ENCODE measurements at regions of chr9 and their contacts with region 1.

Region 1: GRCh38 chr9:131678499-131679111 is 61.3 kb downstream of the RAPGEF1 start:
- DNase-seq: peak; percentile 96
- H3K4me3 Mint-ChIP-seq: peak overlapping the region; percentile 47
- H3K27ac Mint-ChIP-seq: peak overlapping the region; percentile 90
- H3K4me1 Mint-ChIP-seq: peaks cover 44% of the 10 kb centered on the region
- H3K27me3 Mint-ChIP-seq: no peaks in the 10 kb centered on the region
- CTCF ChIP-seq: no peak

Region 2: DNA sequence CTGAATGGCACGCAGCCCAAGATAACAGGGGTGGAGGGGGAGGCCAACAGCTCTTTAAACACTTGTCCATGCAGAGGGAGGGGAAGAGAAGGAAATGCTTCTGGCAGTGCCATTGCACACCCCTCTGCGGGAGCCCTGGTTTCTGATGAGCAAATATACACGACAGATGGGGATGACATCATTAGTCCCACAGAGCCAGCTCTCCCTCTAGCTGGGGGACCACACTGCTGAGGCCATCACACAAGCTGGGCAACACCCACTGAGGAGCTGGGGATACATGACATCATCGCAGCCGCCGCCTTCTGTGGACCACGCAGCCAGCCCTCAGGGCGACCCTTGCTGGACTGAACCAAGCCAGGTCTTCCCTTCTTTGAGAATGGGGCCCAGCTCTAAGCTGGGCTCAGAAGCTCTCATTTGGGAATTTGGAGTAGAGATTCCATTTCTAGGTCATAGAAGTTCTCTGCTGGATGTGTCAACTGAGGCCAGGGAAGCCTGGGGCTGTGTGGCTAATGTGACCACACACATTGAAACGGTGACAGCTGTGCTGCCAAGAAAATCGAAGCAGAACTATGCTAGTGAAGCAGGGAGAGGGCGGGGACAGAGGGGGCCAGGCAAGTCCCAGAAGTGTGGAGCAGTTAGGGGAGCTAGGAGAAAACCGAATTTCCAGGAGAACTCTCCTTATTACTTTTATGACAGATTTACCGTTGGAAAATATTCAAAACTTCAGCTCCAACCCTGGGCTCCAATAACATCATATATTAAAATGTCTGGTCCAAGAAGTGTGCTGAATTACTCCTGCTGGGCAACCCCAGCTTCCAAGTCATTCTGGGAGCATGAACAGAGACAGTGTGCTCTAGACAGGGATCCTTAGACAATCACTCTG is 53.7 kb before region 1 on chr9:
- CTCF ChIA-PET with region 1: no interaction called
- POLR2A ChIA-PET with region 1: no interaction called
- intact Hi-C with region 1: no loop called
- DNase-seq: no peak
- H3K4me3 Mint-ChIP-seq: no peak overlapping the region
- H3K27ac Mint-ChIP-seq: no peak overlapping the region
- H3K4me1 Mint-ChIP-seq: peaks cover 9% of the 10 kb centered on the region
- H3K27me3 Mint-ChIP-seq: no peaks in the 10 kb centered on the region
- CTCF ChIP-seq: no peak

Region 3: GRCh38 chr9:131635285-131635684 is 43.3 kb before region 1 on chr9:
- CTCF ChIA-PET with region 1: interaction called, 7 read pairs
- POLR2A ChIA-PET with region 1: interaction called, 25 read pairs
- intact Hi-C with region 1: no loop called
- DNase-seq: peak; percentile 97
- H3K4me3 Mint-ChIP-seq: no peak overlapping the region
- H3K27ac Mint-ChIP-seq: peak overlapping the region; percentile 77
- H3K4me1 Mint-ChIP-seq: peaks cover 30% of the 10 kb centered on the region
- H3K27me3 Mint-ChIP-seq: no peaks in the 10 kb centered on the region
- CTCF ChIP-seq: no peak

Region 4: GRCh38 chr9:131656356-131657036 is 22.1 kb before region 1 on chr9:
- CTCF ChIA-PET with region 1: interaction called, 7 read pairs
- POLR2A ChIA-PET with region 1: interaction called, 52 read pairs
- intact Hi-C with region 1: no loop called
- DNase-seq: no peak
- H3K4me3 Mint-ChIP-seq: no peak overlapping the region
- H3K27ac Mint-ChIP-seq: peak overlapping the region; percentile 7
- H3K4me1 Mint-ChIP-seq: peaks cover 36% of the 10 kb centered on the region
- H3K27me3 Mint-ChIP-seq: no peaks in the 10 kb centered on the region
- CTCF ChIP-seq: no peak

Region 5: DNA sequence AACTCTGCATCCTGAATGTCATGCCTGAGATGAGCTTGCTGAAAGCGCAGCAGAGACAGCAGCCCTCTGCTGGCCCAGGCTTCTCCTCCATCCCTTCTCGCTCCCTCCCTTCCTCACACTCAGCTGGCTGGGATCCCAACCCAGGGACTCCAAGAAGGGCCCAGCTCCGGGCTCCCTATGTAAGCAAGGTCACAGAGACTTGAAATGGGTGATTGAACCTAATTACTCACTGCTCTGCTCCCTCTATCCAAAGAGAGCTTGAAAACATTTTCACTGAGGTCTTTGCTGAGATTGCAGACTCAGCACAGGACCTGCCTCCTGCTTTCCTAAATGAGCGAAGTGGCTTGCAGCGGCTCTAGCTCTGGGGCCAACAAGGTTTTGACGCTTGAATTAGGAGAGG is 18.5 kb after region 1 on chr9:
- CTCF ChIA-PET with region 1: interaction called, 4 read pairs
- POLR2A ChIA-PET with region 1: interaction called, 72 read pairs
- intact Hi-C with region 1: no loop called
- DNase-seq: no peak
- H3K4me3 Mint-ChIP-seq: no peak overlapping the region
- H3K27ac Mint-ChIP-seq: no peak overlapping the region
- H3K4me1 Mint-ChIP-seq: peaks cover 24% of the 10 kb centered on the region
- H3K27me3 Mint-ChIP-seq: no peaks in the 10 kb centered on the region
- CTCF ChIP-seq: no peak

Region 6: DNA sequence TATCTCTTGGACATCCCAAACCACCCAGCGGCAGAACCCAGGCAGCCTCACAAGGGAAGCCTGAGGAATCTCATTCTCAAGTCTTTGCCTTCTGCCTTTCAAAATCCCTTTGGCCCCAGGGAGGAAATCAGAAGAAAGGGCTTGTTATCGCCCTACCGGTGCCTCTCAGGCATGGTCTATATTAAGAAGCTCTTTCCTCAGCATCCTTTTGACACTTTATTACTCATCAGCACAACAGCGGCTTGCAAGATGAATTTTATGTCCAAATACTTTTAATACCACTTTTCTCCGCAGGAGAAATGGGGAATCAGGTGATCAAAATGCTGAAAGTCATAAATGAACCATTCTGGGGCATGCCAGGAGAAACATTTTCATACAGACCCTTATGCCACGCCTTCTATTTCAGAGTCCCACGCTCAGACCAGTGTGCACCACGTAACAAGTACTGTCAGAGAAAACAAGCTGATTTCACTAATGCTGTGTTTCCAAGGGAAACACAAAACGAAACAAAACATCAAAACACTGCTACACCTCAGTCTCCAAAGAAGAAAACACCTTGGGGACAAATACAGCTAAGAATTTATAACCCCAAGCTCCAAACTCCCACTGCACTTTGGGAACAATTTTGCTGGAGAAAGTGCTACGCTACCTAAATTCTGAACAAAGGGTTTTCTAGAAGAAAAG is 31.3 kb after region 1 on chr9:
- CTCF ChIA-PET with region 1: interaction called, 10 read pairs
- POLR2A ChIA-PET with region 1: interaction called, 47 read pairs
- intact Hi-C with region 1: no loop called
- DNase-seq: peak; percentile 17
- H3K4me3 Mint-ChIP-seq: no peak overlapping the region
- H3K27ac Mint-ChIP-seq: peak overlapping the region; percentile 67
- H3K4me1 Mint-ChIP-seq: peaks cover 38% of the 10 kb centered on the region
- H3K27me3 Mint-ChIP-seq: no peaks in the 10 kb centered on the region
- CTCF ChIP-seq: no peak

Region 7: DNA sequence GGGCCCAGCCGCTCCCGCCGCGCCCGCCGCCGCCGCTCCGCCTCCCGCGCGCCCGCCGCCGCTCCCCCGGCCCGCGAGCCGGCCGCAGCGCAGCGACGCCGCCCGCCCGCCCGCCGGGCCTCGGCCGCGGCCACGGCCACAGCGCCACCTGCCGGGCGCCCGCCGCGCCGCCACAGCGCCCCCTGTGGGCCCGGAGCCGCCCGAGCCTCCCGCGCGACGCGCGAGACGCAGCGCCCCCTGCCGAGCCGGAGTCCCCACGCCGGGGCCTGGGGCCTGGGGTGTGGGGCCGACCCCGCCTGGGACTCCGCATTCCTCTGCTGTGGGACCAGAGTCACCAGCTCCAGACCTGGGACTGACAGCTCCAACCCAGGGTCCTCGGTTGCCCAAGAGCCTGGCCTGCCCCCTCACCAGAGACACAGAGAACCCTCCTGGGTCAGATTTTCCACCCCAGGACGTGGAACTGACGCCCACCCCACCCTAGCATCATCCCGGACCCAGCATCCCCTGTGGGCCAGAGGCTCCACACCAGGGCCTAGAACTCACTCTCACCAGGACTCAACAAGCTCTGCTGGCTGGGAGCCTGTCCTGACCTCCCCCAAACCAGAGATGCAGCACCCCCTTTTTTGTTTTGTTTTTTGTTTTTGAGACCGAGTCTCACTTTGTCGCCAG is 61.5 kb after region 1 on chr9 and contains the start of gene RAPGEF1:
- CTCF ChIA-PET with region 1: interaction called, 10 read pairs
- POLR2A ChIA-PET with region 1: interaction called, 19 read pairs
- intact Hi-C with region 1: no loop called
- DNase-seq: peak; percentile 42
- H3K4me3 Mint-ChIP-seq: peak within 1 kb of the TSS; percentile 85
- H3K27ac Mint-ChIP-seq: peak within 1 kb of the TSS; percentile 82
- H3K4me1 Mint-ChIP-seq: peaks cover 18% of the 10 kb centered on the region
- H3K27me3 Mint-ChIP-seq: no peaks in the 10 kb centered on the region
- CTCF ChIP-seq: peak; percentile 96
- total RNA-seq, gene RAPGEF1: 55.4 and 73.0 TPM in 2 replicates

Region 8: DNA sequence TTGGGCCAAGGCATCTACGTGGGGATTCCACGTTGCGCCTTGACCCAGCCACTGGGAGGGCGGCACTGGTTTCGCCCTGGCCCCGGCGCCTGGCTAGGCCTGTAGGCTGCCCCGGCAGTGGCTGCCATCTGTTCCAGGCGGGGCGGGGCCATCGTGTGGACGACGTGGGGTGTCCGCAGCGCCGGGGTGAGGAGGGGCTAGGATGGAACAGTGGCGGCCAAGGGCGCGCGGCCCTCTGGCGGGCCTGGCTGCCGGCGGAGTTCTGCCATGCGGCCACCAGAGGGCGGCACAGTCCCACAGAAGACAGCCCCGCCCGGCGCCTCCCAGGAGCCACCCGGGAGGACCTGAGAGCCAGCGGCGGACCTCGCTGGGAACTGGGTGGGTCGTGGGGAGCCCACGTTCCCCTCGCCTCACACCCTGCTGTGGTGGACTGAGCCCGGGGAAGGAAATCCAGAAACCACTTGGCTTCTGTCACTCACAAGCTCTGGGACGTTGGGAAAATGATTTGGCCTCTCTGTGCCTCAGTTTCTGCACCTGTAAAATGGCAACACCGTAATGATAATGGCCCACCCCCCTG is 83.8 kb after region 1 on chr9:
- CTCF ChIA-PET with region 1: no interaction called
- POLR2A ChIA-PET with region 1: no interaction called
- intact Hi-C with region 1: no loop called
- DNase-seq: peak; percentile 58
- H3K4me3 Mint-ChIP-seq: no peak overlapping the region
- H3K27ac Mint-ChIP-seq: no peak overlapping the region
- H3K4me1 Mint-ChIP-seq: no peaks in the 10 kb centered on the region
- H3K27me3 Mint-ChIP-seq: peaks cover 51% of the 10 kb centered on the region
- CTCF ChIP-seq: peak; percentile 95

Measured in MCF 10A (cell line).